Activated CD4-positive, alpha-beta T cell treated with anti-CD3 and anti-CD28 coated beads, Interleukin-2, amount 10 ng/mL, durations not matched to agents 24 days and 14 days (primary cell): ENCODE measurements at regions of chr3 and their contacts with region 1.

Region 1: GRCh38 chr3:45665101-45665572 is 24.1 kb upstream of the SACM1L start:
- DNase-seq: peak; percentile 86
- H3K4me3 Mint-ChIP-seq: peak overlapping the region; percentile 76
- H3K27ac Mint-ChIP-seq: peak overlapping the region; percentile 88
- H3K4me1 Mint-ChIP-seq: peaks cover 49% of the 10 kb centered on the region
- H3K27me3 Mint-ChIP-seq: no peaks in the 10 kb centered on the region

Region 2: DNA sequence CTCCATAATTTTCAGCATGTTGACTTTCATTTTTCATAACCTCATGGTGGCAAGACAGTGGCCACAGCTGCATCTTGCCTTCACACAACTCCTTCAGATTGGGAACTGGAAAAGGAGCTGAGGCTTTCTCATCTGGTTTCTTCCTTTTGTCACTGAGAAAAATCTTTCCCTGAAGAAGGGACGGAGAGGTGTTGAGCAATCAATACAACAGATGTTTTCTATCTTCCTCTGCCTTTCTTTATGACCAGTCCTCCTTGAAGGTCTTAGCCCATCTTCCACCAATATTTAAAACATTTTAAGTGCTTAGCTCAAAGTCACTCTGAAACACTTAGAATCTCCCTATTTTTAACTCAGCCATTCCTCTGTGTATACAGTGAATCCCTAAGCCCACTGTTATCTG is 1068.5 kb before region 1 on chr3:
- intact Hi-C with region 1: no loop called
- DNase-seq: no peak
- H3K4me3 Mint-ChIP-seq: no peak overlapping the region
- H3K27ac Mint-ChIP-seq: no peak overlapping the region
- H3K4me1 Mint-ChIP-seq: no peaks in the 10 kb centered on the region
- H3K27me3 Mint-ChIP-seq: no peaks in the 10 kb centered on the region

Region 3: GRCh38 chr3:45464336-45465170 is 200.6 kb before region 1 on chr3:
- intact Hi-C with region 1: loop called (anchors 1 kb)
- DNase-seq: peak; percentile 76
- H3K4me3 Mint-ChIP-seq: no peak overlapping the region
- H3K27ac Mint-ChIP-seq: no peak overlapping the region
- H3K4me1 Mint-ChIP-seq: peaks cover 34% of the 10 kb centered on the region
- H3K27me3 Mint-ChIP-seq: no peaks in the 10 kb centered on the region

Region 4: DNA sequence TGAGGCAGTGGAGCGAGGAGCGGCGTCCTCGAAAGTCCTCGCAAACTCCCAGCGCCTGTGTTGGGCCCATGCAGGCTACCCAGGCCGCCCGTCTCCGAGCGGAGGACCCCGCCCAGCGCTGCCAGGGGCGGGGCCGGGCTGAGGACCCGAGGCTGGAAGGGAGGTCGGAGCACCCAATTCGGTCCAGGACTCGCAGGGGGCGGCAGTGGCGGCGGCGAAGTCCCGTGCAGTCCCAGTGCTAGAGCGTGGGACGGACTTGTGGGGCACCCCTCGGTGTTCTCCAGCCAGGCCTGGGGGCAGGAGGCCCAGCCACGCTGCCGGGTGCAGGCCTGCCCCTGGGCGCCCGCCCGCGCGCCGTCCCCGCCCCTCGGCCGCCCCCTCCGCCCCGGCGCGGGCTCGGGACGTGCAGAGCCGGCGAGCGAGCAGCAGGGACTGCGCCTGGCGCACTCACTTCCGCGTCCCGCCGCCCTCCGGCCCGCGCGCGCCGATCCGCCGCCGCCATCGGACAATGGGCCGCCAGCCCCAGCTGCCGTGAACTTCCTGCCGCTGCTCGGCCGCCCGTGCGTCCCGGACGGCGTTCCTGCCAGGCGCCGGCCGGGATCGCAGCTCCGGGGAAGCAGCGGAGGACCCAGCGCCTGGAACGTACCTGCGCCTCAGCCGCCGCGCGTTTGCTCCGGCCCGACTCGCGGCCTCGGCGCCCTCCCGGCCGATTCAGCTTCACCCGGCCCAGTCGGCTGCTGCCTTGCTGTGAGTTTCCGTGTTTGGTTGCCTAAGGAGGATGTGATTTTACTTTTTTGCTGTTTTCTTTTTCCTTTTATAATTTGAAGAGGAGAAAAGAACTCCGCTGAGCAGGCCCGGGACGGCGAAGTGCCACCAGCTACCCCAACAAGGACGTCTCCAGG is 71.2 kb before region 1 on chr3:
- intact Hi-C with region 1: loop called (anchors 2 kb)
- DNase-seq: peak; percentile 94
- H3K4me3 Mint-ChIP-seq: peak overlapping the region; percentile 83
- H3K27ac Mint-ChIP-seq: peak overlapping the region; percentile 90
- H3K4me1 Mint-ChIP-seq: peaks cover 48% of the 10 kb centered on the region
- H3K27me3 Mint-ChIP-seq: peaks cover 3% of the 10 kb centered on the region

Region 5: DNA sequence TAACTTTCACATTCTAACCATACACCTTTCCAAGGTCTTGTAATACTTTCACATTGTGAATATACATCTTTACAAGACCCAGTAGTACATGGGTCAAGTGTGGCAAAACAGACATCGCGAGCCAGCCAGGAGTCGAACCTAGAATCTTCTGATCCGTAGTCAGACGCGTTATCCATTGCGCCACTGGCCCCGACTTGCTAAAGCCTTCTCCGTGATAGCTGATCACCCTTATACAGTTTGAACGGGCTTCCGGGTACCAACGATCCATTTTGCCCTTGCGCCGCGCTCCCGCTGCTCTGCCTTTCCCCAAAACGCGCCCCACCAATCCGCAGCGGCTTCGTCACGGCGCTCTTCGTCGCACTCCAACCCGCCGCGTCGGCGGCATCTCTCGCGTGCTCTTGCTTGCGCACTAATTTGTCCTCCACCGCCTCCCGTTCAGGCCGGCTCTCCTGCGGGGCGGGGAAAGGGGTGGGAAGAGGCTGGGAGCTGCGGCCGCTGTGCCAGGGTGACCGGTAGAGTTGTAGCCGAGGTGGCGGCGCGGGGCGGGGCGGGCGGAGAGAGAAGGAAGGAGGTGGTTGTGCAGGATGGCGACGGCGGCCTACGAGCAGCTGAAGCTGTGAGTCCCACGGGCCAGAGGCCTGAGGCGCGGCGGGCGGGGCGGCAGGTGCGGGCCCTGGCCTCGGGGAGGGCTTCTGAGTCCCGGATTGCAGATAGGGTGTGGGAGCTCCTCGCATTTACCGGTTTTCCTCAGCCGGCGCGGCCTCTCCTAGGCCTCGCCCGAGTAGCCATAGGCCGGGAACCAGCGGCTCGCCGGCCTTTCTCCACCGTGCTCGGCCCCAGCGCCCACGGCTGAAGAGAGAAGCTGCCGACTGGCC is 24.0 kb after region 1 on chr3 and contains the start of gene SACM1L:
- intact Hi-C with region 1: loop called (anchors 1 kb)
- DNase-seq: peak; percentile 99
- H3K4me3 Mint-ChIP-seq: peak within 1 kb of the TSS; percentile 87
- H3K27ac Mint-ChIP-seq: peak within 1 kb of the TSS; percentile 94
- H3K4me1 Mint-ChIP-seq: peaks cover 46% of the 10 kb centered on the region
- H3K27me3 Mint-ChIP-seq: peaks cover 4% of the 10 kb centered on the region
- total RNA-seq, gene SACM1L: 88.0 and 91.7 TPM in 2 replicates

Region 6: GRCh38 chr3:45730409-45731154 is 65.4 kb after region 1 on chr3:
- intact Hi-C with region 1: no loop called
- DNase-seq: no peak
- H3K4me3 Mint-ChIP-seq: no peak overlapping the region
- H3K27ac Mint-ChIP-seq: no peak overlapping the region
- H3K4me1 Mint-ChIP-seq: peaks cover 15% of the 10 kb centered on the region
- H3K27me3 Mint-ChIP-seq: no peaks in the 10 kb centered on the region

Region 7: DNA sequence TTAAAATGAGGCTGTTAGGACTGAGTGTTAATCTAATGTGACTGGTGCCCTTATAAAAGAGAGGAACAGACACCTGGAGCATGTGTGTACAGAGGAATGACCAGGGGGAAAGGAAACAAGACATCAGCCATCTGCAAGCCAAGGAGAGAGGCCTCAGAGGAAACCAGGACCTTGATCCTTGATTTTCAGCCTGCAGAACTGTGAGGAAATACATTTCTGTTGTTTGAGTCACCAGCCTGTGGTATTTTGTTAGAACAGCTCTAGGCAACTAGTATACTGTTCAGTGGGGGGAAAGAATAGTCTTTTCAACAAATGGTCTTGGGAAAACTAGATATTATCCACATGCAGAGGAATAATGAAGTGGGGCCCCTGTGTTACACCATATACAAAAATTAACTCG is 462.4 kb after region 1 on chr3:
- intact Hi-C with region 1: no loop called
- DNase-seq: no peak
- H3K4me3 Mint-ChIP-seq: no peak overlapping the region
- H3K27ac Mint-ChIP-seq: no peak overlapping the region
- H3K4me1 Mint-ChIP-seq: peaks cover 31% of the 10 kb centered on the region
- H3K27me3 Mint-ChIP-seq: peaks cover 31% of the 10 kb centered on the region